ENCODE measurements at regions of chr13 and their contacts with region 1.

Region 1: DNA sequence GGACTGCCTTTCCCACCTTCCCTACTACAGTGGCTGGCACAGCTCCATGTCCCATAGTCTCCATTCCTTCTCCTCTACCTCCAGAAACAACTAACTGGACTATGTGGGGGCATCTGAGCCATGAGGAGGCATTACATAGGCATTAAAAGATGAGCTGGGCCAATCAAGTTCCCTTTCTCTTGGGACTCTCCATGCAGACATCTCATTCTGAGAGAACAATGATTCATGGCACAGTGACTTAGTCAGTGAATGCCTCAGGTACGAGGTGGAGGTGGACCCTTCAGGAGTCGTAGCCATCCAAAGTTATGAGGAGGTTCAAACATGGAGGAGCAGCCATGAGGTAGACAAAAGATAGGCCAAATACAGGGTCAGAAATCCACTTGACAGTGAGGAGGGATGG is 70.0 kb downstream of the GPC6 start:
- DNase-seq: peak in 1 of 4 experiments; percentile 24
- ATAC-seq: no peak
- H3K4me3 ChIP-seq: no peak overlapping the region
- H3K27ac ChIP-seq: no peak overlapping the region
- H3K4me1 ChIP-seq: no peaks in the 10 kb centered on the region
- H3K27me3 ChIP-seq: peaks cover 2 to 5% of the 10 kb centered on the region in 2 experiments; a peak in 2 of 5 replicates
- CTCF ChIP-seq: no peak
- EP300 ChIP-seq: no peak
- POLR2A ChIP-seq: no peak
- RAD21 ChIP-seq: no peak

Region 2: DNA sequence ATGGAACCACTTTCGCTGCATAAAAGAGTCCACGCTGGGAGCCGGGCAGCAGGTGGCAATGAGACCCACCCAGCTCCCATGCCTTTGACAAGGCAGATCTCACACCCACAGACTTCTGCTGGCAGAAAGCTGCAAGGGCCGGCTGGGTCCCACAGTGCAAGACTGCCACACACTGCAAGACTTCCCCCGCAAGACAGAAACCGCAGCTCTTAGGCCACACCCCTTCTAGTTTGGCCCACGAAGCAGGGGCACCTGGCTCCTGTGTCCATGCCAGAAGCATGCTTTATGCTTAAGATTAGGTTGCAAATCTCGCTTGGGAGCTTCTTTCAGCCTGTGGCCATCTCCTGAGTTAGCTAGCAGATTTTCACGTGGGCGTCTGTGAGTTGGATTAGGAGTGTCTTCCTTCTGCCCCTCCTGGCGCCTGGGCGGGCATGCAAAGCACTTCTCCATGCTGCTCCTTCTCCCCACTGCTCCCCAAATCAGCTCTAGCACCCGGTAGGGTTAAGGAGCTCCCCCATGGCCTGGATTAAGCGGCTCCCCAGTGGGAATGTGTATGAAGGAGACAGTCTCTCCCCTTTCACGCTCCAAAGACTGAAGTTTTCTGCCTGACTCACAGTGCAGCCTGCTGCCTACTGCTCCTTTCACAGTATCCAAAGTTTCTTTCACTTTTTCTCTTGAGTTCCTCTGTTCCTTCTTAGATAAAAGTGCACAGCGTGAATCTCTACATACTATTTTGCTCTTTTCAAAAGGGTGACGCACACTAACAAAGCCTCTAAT is 52.3 kb before region 1 on chr13:
- CTCF ChIA-PET with region 1: no interaction called
- POLR2A ChIA-PET with region 1: no interaction called
- in situ Hi-C with region 1: no loop called
- intact Hi-C with region 1: no loop called
- DNase-seq: peak in 1 of 4 experiments; percentile 30
- ATAC-seq: peak; percentile 65
- H3K4me3 ChIP-seq: no peak overlapping the region
- H3K27ac ChIP-seq: no peak overlapping the region
- H3K4me1 ChIP-seq: peaks cover 0 to 4% of the 10 kb centered on the region in 2 experiments; a peak in 2 of 5 replicates
- H3K27me3 ChIP-seq: peaks cover 0 to 7% of the 10 kb centered on the region in 2 experiments; a peak in 1 of 5 replicates
- CTCF ChIP-seq: no peak
- EP300 ChIP-seq: no peak
- POLR2A ChIP-seq: no peak
- RAD21 ChIP-seq: no peak

Region 3: DNA sequence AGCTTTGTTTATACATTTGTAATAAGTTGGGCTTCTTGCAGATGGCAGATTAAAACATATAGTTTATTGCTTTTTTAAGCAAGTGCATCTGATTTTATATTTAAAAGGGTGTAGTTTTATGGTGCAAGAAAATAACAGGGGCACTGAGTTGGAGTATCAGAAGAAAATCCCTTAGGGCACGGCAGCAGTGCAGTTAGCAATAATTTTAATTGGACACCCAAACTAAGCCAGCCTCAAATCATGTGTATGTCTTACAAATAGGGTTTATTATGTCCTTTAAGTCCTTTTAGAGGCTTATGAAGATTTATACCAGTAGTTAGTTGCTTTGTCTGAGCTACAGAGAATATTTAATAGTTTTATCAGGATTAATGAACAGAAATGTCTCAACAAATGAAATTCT is 12.5 kb before region 1 on chr13:
- CTCF ChIA-PET with region 1: no interaction called
- POLR2A ChIA-PET with region 1: interaction called, 10 read pairs
- in situ Hi-C with region 1: no loop called
- intact Hi-C with region 1: no loop called
- DNase-seq: no peak
- ATAC-seq: no peak
- H3K4me3 ChIP-seq: no peak overlapping the region
- H3K27ac ChIP-seq: no peak overlapping the region
- H3K4me1 ChIP-seq: no peaks in the 10 kb centered on the region
- H3K27me3 ChIP-seq: peaks cover 4% of the 10 kb centered on the region in 2 experiments; a peak in 1 of 5 replicates
- CTCF ChIP-seq: no peak
- EP300 ChIP-seq: no peak
- POLR2A ChIP-seq: no peak
- RAD21 ChIP-seq: no peak

Region 4: GRCh38 chr13:93318534-93319254 is 22.1 kb after region 1 on chr13:
- CTCF ChIA-PET with region 1: no interaction called
- POLR2A ChIA-PET with region 1: interaction called, 3 read pairs
- in situ Hi-C with region 1: no loop called
- intact Hi-C with region 1: loop called (anchors 1 kb)
- DNase-seq: no peak
- ATAC-seq: peak; percentile 47
- H3K4me3 ChIP-seq: no peak overlapping the region
- H3K27ac ChIP-seq: no peak overlapping the region
- H3K4me1 ChIP-seq: no peaks in the 10 kb centered on the region; a peak in 1 of 5 replicates
- H3K27me3 ChIP-seq: no peaks in the 10 kb centered on the region
- CTCF ChIP-seq: no peak
- EP300 ChIP-seq: no peak
- POLR2A ChIP-seq: no peak
- RAD21 ChIP-seq: no peak

Region 5: GRCh38 chr13:94093652-94094315 is 797.2 kb after region 1 on chr13:
- CTCF ChIA-PET with region 1: no interaction called
- POLR2A ChIA-PET with region 1: no interaction called
- in situ Hi-C with region 1: no loop called
- intact Hi-C with region 1: no loop called
- DNase-seq: no peak
- ATAC-seq: no peak
- H3K4me3 ChIP-seq: no peak overlapping the region
- H3K27ac ChIP-seq: no peak overlapping the region
- H3K4me1 ChIP-seq: no peaks in the 10 kb centered on the region
- H3K27me3 ChIP-seq: no peaks in the 10 kb centered on the region
- CTCF ChIP-seq: no peak
- EP300 ChIP-seq: no peak
- POLR2A ChIP-seq: no peak
- RAD21 ChIP-seq: no peak